CD8-positive, alpha-beta T cell (primary cell): ENCODE measurements at regions of chr5 and their contacts with region 1.

Region 1: DNA sequence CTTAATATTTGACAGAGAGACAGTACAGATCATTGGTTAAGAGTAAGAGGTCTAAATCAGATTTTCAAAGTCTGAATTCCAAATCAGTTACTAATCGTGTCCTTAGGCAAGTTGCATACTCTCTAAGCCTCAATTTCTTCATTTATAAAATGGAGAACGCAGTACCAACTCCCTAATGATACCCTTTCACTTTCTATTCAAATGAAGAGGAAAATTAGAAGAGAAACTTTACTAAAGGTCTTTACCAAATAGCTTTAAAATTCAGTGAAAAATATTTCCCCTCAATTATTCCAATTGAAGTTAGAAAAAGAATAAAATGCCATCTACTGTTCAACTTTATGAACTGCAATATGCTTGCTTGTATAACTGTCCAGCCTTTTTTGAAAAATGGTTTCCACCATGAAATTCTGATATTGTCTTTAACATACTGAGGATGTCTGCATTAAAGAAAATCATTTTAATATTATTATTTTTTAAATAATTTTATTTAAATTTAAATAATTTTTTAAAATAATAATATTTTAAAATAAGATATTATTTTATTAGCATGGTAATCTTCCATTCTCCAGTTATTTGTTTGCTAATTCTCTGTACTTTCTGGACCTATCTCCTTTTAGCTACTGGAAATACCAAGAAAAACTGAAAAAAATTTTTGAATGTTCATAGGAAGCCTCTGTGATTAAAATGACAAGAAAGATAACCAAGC is 36.0 kb downstream of the POC5 start:
- DNase-seq: peak in 2 of 9 experiments; percentile 45 to 61
- ATAC-seq: peak; percentile 49
- H3K4me3 ChIP-seq: no peak overlapping the region
- H3K4me3 Mint-ChIP-seq: no peak overlapping the region
- H3K27ac ChIP-seq: no peak overlapping the region
- H3K27ac Mint-ChIP-seq: no peak overlapping the region
- H3K4me1 ChIP-seq: peaks cover 10% of the 10 kb centered on the region
- H3K4me1 Mint-ChIP-seq: peaks cover 8% of the 10 kb centered on the region
- H3K27me3 ChIP-seq: no peaks in the 10 kb centered on the region
- H3K27me3 Mint-ChIP-seq: no peaks in the 10 kb centered on the region
- CTCF ChIP-seq: peak; percentile 90

Region 2: DNA sequence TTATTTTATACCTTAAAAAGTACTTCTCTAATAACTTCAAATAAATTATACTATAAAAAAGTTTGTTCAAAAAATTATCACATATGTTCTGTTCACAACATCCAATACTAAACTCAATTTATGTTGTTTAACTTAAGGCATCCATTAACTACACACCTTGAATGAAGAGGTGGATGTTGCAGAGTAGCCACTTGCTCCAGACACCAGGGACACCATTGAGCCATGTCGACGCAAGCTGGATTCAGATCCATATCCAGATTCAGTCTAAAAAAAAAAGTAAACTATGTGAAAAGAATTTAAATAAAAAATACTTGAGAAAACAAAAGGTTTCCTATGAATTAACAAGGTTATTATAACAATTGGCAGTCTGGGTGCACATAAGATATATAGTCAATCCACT is 255.1 kb before region 1 on chr5:
- CTCF ChIA-PET with region 1: no interaction called
- POLR2A ChIA-PET with region 1: no interaction called
- intact Hi-C with region 1: loop called in 1 of 2 experiments (anchors 10 kb)
- DNase-seq: no peak
- ATAC-seq: no peak
- H3K4me3 ChIP-seq: no peak overlapping the region
- H3K4me3 Mint-ChIP-seq: no peak overlapping the region
- H3K27ac ChIP-seq: no peak overlapping the region
- H3K27ac Mint-ChIP-seq: no peak overlapping the region
- H3K4me1 ChIP-seq: no peaks in the 10 kb centered on the region
- H3K4me1 Mint-ChIP-seq: peaks cover 3% of the 10 kb centered on the region
- H3K27me3 ChIP-seq: no peaks in the 10 kb centered on the region
- H3K27me3 Mint-ChIP-seq: no peaks in the 10 kb centered on the region
- CTCF ChIP-seq: no peak

Region 3: GRCh38 chr5:75584641-75585040 is 96.6 kb before region 1 on chr5:
- CTCF ChIA-PET with region 1: interaction called, 3 read pairs
- POLR2A ChIA-PET with region 1: no interaction called
- intact Hi-C with region 1: loop called in 1 of 2 experiments (anchors 5 kb)
- DNase-seq: no peak
- ATAC-seq: no peak
- H3K4me3 ChIP-seq: no peak overlapping the region
- H3K4me3 Mint-ChIP-seq: no peak overlapping the region
- H3K27ac ChIP-seq: no peak overlapping the region
- H3K27ac Mint-ChIP-seq: no peak overlapping the region
- H3K4me1 ChIP-seq: no peaks in the 10 kb centered on the region
- H3K4me1 Mint-ChIP-seq: no peaks in the 10 kb centered on the region
- H3K27me3 ChIP-seq: no peaks in the 10 kb centered on the region
- H3K27me3 Mint-ChIP-seq: no peaks in the 10 kb centered on the region
- CTCF ChIP-seq: no peak

Region 4: DNA sequence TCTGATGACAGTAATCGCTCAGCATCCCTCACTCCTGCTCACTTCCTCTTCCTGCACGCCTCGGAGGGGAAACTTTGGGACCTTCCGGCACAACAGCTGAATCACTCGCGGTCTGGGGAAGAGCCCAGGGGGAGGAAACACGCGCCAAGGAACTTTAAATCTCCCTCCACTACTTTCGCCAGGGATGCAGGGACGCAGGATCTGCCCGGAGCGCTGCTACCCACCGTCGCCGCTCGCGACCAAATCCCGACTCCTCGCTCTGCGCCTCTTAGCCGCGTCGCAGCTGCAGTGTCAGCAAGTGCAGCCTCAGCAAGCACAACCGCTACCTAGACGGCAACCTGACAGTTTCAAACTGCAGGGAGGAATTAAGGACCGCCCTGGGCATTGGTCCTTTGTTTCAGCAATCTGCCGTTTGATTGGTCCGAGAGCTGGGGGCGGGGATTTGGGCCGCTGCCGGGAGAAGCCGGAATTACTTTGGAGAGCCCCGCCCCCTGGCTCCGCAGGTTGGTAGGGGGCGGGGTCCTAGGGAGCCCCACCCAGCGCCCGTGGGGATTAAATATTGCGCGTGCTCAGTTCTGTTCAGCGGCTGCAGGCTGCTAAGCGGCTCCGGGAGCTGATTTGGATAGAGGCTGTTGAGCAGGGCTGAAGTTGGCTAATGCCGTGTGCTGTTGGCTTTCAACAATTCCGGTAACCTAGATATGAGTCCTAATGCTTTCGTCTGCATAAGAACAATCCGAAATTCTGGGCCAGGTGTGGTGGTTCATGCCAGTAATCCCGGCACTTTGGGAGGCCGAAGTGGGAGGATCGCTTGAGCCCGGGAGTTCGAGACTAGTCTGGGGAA is 36.0 kb after region 1 on chr5 and contains the start of gene POC5:
- CTCF ChIA-PET with region 1: no interaction called
- POLR2A ChIA-PET with region 1: interaction called, 4 read pairs
- intact Hi-C with region 1: loop called in 1 of 2 experiments (anchors 5 kb)
- DNase-seq: peak; percentile 96 to 99 (median 98)
- ATAC-seq: peak; percentile 95
- H3K4me3 ChIP-seq: peak within 1 kb of the TSS; percentile 82 to 93
- H3K4me3 Mint-ChIP-seq: peak within 1 kb of the TSS; percentile 100
- H3K27ac ChIP-seq: peak within 1 kb of the TSS; percentile 69 to 88
- H3K27ac Mint-ChIP-seq: peak within 1 kb of the TSS; percentile 98
- H3K4me1 ChIP-seq: peaks cover 11% of the 10 kb centered on the region
- H3K4me1 Mint-ChIP-seq: peaks cover 39% of the 10 kb centered on the region
- H3K27me3 ChIP-seq: no peaks in the 10 kb centered on the region
- H3K27me3 Mint-ChIP-seq: no peaks in the 10 kb centered on the region
- CTCF ChIP-seq: no peak
- total RNA-seq, gene POC5: 6.5 to 7.9 TPM

Region 5: DNA sequence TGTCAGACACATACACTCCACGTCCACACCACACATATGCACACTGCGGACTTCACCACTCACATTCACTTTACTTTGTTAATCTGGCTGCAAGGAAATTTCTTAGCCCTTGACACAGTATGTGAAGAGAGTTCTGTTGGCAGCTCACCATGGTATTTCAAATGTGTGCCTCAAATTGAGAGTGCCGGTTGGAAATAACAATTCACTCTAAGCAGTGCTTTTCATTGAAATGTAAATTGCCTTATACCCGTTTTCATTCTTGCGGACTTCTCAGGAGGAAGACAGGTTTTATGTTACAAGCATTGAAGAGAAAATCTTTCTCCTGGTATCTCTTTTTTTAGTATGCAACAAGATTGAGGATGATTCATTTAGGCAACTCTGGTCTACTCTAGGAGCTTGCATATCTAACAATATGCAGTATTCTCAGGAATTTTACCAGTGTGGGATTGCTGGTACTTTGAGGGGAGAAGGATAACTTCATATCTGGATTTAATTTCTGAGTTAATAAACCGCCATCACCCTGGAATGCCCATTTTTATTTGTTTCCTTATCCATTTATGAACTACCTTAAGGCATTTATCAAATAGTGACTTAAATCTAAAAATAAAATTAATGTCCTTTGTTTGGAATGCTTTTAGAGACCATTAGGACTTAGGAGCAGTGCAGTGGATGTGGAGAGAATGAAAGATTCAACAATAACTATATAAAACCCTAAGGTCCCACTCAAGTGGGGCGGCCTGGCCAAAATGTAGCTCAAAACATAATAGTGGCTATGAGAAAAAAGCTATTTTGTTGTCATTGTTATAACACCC is 808.8 kb after region 1 on chr5:
- CTCF ChIA-PET with region 1: no interaction called
- POLR2A ChIA-PET with region 1: no interaction called
- intact Hi-C with region 1: no loop called
- DNase-seq: no peak
- ATAC-seq: no peak
- H3K4me3 ChIP-seq: no peak overlapping the region
- H3K4me3 Mint-ChIP-seq: no peak overlapping the region
- H3K27ac ChIP-seq: no peak overlapping the region
- H3K27ac Mint-ChIP-seq: no peak overlapping the region
- H3K4me1 ChIP-seq: peaks cover 12% of the 10 kb centered on the region
- H3K4me1 Mint-ChIP-seq: peaks cover 57% of the 10 kb centered on the region
- H3K27me3 ChIP-seq: no peaks in the 10 kb centered on the region
- H3K27me3 Mint-ChIP-seq: no peaks in the 10 kb centered on the region
- CTCF ChIP-seq: no peak